Right ventricle myocardium inferior (tissue), 1 donor: ENCODE measurements at regions of chr14 and their contacts with region 1.

Region 1: DNA sequence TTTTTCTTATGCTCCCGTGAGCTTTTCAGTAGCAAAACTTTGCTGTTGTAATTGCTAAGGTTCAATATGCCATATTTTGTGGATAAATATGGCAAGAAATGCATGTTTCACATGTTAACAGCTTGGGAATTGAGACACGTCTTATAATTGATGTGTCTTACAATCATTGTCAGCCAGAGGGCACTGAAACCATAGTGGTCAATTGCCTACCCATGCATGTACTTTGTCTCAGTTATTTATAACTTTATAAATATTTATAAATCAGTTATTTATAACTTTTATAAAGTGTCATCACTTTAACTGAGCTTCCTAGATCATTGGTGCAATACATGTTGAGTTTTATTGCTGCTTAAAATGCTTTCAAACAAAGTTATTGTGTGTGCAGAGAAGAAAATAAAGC is 82.0 kb downstream of the CATSPERB start:
- DNase-seq: no peak
- ATAC-seq: no peak

Region 2: DNA sequence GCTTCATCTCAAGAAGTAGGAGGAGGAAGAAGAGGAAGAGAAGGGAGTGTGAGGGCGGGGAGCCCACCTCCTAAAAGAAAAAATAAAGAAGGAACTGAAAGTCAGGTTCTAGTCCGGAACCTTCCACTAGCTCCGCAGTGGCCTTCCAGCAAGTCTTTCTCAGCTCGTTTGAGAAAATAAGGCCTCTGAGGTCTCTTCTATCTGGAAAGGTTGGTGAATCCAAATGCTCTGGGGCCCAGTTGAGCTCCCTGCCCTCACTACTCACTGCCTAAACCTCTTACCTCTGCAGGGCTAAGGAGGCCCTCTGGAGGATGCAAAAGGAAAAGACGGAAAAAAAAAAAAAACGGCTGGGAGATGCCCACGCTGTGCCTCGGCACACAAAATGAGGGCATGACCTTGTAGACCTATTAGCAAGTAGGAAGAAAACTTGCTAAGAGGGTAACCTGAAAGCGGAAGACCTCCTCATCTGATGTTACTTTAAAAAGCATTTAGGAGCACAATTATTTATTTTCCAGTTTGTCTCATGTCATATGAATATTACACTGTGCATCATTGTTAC is 261.6 kb after region 1 on chr14:
- intact Hi-C with region 1: loop called (anchors 5 kb)
- DNase-seq: no peak
- ATAC-seq: peak; percentile 65

Region 3: GRCh38 chr14:91996948-91997371 is 347.0 kb after region 1 on chr14:
- intact Hi-C with region 1: loop called (anchors 10 kb)
- DNase-seq: no peak
- ATAC-seq: peak; percentile 26